GM12878 (cell line): ENCODE measurements at regions of chr7 and their contacts with region 1.

Region 1: DNA sequence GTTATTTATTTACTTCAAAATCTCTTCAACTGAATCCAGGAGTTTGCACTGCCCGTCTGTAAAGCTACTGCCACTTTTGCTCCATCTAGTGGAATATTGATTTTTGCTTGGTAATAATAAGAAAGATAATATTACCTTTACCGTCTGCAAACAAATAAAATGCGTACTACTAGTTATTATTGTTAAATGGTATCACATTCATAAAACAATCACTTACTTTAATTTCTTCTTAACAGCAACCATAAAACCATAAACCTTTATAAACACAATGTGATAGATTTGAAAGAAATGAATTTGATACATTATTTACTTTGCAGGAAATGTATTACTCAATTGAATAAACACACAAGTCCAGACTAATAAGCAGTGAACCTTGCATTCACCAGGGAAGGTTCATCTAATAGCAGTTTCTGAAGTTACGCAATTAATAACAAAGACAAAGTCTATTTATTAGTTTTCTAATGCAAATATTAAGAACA is 6.4 kb downstream of the AGMO start:
- DNase-seq: no peak
- ATAC-seq: no peak; the same call in 2 of the 3 replicates
- H3K4me3 ChIP-seq: no peak overlapping the region
- H3K27ac ChIP-seq: no peak overlapping the region
- H3K4me1 ChIP-seq: no peaks in the 10 kb centered on the region
- H3K27me3 ChIP-seq: no peaks in the 10 kb centered on the region
- CTCF ChIP-seq: no peak; a peak in 1 of 6 replicates
- EP300 ChIP-seq: no peak
- POLR2A ChIP-seq: no peak
- RAD21 ChIP-seq: no peak

Region 2: DNA sequence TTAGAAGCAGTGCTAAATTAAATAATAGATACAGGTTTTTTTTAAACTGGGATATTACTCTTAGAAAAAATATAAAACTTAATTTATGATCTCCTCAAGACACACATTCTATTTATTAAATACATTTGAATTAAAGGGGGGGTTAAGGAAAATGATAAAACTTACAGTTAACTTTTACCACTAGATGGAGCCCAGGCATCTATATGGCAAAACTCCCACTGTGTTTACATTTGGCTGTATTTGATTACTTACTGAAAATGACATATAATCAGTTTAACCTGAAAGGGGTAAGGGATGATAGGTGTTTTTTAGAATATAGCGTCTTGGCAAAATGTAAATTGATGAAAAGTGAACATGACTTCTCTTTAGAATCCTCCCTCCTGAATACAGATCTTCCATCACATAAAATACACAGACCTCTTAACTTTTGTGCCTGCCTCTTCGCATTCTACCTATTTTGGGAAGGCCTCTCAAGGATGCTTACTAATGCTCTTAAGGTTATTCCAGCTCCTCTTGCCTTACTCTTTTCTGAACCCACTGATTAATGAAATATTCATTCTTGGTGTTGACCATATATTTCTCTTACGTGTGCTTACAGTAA is 229.3 kb before region 1 on chr7:
- CTCF ChIA-PET with region 1: interaction called, 20 read pairs
- POLR2A ChIA-PET with region 1: no interaction called
- RAD21 ChIA-PET with region 1: interaction called, 4 read pairs
- SMC1A ChIA-PET with region 1: interaction called, 12 read pairs
- in situ Hi-C with region 1: no loop called
- intact Hi-C with region 1: no loop called
- DNase-seq: no peak
- ATAC-seq: peak; percentile 62
- H3K4me3 ChIP-seq: no peak overlapping the region
- H3K27ac ChIP-seq: no peak overlapping the region
- H3K4me1 ChIP-seq: no peaks in the 10 kb centered on the region
- H3K27me3 ChIP-seq: no peaks in the 10 kb centered on the region
- CTCF ChIP-seq: peak; percentile 21 to 49 (median 28); a peak in 3 of 6 replicates
- EP300 ChIP-seq: no peak
- POLR2A ChIP-seq: no peak
- RAD21 ChIP-seq: peak; percentile 33

Region 3: GRCh38 chr7:15430911-15431310 is 124.5 kb before region 1 on chr7:
- CTCF ChIA-PET with region 1: no interaction called
- POLR2A ChIA-PET with region 1: no interaction called
- RAD21 ChIA-PET with region 1: interaction called, 5 read pairs
- SMC1A ChIA-PET with region 1: interaction called, 10 read pairs
- in situ Hi-C with region 1: no loop called
- intact Hi-C with region 1: no loop called
- DNase-seq: no peak
- ATAC-seq: peak; percentile 24; the same call in 2 of the 3 replicates
- H3K4me3 ChIP-seq: no peak overlapping the region
- H3K27ac ChIP-seq: no peak overlapping the region
- H3K4me1 ChIP-seq: no peaks in the 10 kb centered on the region
- H3K27me3 ChIP-seq: no peaks in the 10 kb centered on the region
- CTCF ChIP-seq: no peak
- EP300 ChIP-seq: no peak
- POLR2A ChIP-seq: no peak
- RAD21 ChIP-seq: no peak

Region 4: GRCh38 chr7:15581352-15581951 is 26.0 kb after region 1 on chr7:
- CTCF ChIA-PET with region 1: interaction called, 25 read pairs
- POLR2A ChIA-PET with region 1: interaction called, 4 read pairs
- RAD21 ChIA-PET with region 1: interaction called, 29 read pairs
- SMC1A ChIA-PET with region 1: interaction called, 9 read pairs
- in situ Hi-C with region 1: no loop called
- intact Hi-C with region 1: no loop called
- DNase-seq: no peak
- ATAC-seq: peak; percentile 60
- H3K4me3 ChIP-seq: no peak overlapping the region
- H3K27ac ChIP-seq: no peak overlapping the region
- H3K4me1 ChIP-seq: no peaks in the 10 kb centered on the region
- H3K27me3 ChIP-seq: no peaks in the 10 kb centered on the region
- CTCF ChIP-seq: no peak
- EP300 ChIP-seq: no peak
- POLR2A ChIP-seq: no peak
- RAD21 ChIP-seq: no peak

Region 5: DNA sequence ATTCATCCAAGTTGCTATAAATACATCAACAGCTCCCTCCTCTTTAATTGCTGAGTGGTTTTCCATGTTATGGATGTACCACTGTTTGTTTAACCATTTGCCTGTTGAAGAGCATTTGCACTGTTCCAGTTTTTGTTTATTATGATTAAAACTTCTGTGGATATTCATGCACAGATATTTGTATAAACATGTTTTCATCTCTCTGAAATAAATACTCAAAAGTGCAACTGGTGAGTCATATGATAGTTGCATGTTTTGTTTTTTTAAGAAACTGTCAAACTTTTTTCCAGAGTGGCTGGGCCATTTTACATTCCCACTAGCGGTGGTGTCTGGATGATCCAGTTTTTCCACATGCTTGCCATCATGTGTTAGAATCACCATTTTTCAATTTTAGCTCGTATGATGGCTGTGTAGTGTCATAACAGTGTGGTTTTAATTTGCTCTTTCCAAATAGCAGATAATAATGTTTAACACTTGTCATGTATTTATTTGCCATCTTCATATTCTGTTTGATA is 97.4 kb after region 1 on chr7:
- CTCF ChIA-PET with region 1: no interaction called
- POLR2A ChIA-PET with region 1: no interaction called
- RAD21 ChIA-PET with region 1: interaction called, 4 read pairs
- SMC1A ChIA-PET with region 1: interaction called, 4 read pairs
- in situ Hi-C with region 1: no loop called
- intact Hi-C with region 1: loop called (anchors 5 kb)
- DNase-seq: no peak
- ATAC-seq: no peak
- H3K4me3 ChIP-seq: no peak overlapping the region
- H3K27ac ChIP-seq: no peak overlapping the region
- H3K4me1 ChIP-seq: no peaks in the 10 kb centered on the region
- H3K27me3 ChIP-seq: no peaks in the 10 kb centered on the region
- CTCF ChIP-seq: no peak
- EP300 ChIP-seq: no peak
- POLR2A ChIP-seq: no peak
- RAD21 ChIP-seq: no peak